Thyroid gland (tissue), 4 donors: ENCODE measurements at regions of chr9 and their contacts with region 1.

Region 1: DNA sequence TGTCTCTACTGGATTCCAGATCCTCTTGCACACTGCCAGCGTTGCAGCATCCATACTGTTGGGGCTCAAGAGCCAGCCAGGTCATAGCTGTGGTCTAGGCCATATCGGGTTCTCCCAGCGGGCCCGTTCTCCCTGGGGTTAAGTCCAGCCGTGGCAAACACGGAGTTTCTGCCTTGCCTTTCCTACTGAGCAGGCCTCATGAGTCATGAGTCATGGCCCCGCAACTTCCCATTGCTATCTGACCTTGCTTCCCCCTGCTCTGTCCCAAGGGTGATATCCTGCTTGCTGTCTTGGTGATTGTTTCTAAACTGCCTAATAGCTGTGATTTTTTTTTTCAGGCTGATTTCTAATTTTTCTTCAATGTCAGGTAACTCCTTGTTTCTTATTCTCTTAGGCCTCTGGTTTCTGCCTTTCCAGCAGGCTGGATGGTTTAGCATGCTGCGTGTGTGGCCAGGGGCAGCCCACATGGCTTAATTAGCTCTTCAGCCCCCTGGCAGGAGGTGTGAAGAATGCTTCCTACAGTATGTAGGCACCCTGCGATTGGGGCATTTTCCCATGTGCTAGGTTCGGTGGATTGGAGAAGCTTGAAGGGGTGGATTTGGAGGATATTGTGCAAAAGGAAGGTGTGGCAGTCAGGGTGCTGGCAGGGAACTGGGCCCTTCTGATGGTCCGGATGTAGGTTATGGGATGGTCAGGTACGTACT is 18.7 kb downstream of the DAPK1 start:
- DNase-seq: peak; percentile 9 to 27
- H3K4me3 ChIP-seq: no peak overlapping the region
- H3K27ac ChIP-seq: no peak overlapping the region
- H3K4me1 ChIP-seq: peaks cover 12 to 21% of the 10 kb centered on the region in 2 donors
- H3K27me3 ChIP-seq: no peaks in the 10 kb centered on the region
- CTCF ChIP-seq: no peak
- POLR2A ChIP-seq: no peak

Region 2: GRCh38 chr9:87569518-87569917 is 53.1 kb after region 1 on chr9:
- intact Hi-C with region 1: loop called (anchors 10 kb)
- DNase-seq: peak in 1 of 2 donors; percentile 51
- H3K4me3 ChIP-seq: no peak overlapping the region
- H3K27ac ChIP-seq: peak overlapping the region; percentile 76 to 79 (median 77)
- H3K4me1 ChIP-seq: peaks cover 47 to 57% of the 10 kb centered on the region in 2 donors
- H3K27me3 ChIP-seq: no peaks in the 10 kb centered on the region
- CTCF ChIP-seq: no peak
- POLR2A ChIP-seq: no peak